ENCODE measurements at regions of chr1 and their contacts with region 1.

Region 1: DNA sequence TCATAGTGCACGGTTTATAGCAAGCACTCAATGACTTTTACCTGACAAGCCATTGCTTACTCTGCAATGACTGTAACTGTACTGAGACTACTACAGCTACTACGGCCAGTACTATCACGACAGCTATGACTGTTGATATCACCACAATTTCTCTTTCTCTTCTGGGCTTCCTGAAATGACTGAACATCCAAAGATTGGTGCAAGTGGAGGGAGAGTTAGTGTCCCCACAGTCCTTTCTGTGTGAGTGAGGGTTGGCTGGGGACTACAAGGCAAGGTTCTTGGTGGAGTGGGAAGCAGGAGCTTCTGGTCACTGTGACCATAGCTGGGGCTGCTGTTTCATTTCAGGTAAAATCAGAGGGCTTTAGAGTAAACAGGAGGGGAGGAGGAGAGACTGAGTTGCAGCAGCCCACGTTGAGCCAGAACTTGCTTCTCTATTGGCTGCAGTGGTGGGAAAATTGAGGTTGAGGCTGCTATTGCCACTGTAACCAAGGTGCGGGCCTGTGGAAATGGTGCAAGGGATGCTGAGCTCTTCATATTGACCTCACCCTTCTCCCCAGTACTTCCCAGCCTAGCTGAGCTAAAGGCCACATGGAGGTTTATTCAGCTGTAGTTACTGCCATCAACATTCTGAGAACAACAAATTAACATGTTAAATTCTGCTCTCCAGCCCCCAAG is 14.1 kb upstream of the IL10 start:
- DNase-seq: no peak
- H3K4me3 Mint-ChIP-seq: no peak overlapping the region
- H3K27ac Mint-ChIP-seq: no peak overlapping the region
- H3K4me1 Mint-ChIP-seq: peaks cover 78% of the 10 kb centered on the region
- H3K27me3 Mint-ChIP-seq: peaks cover 33% of the 10 kb centered on the region

Region 2: DNA sequence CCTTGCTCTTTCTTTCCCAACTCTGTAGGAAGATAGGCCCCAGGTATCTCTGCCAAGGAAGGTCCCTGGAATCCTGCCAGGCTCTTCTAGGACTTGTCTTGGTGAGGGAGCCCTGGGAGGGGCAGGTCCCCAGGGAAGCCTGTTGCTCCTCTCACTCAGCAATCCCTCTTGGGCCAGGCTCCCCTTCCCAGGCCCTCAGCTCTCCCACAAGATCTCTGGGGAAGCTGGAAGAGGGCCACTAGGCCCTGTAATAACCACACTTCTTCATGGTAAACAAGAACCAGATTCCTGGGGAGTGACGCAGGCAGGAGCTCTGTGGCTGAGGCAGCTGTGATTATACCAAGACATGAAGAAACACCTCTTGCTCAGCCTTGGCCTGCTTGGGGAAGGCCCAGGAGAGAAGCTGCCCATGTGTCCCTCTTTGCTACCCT is 111.6 kb before region 1 on chr1:
- CTCF ChIA-PET with region 1: no interaction called
- POLR2A ChIA-PET with region 1: no interaction called
- DNase-seq: no peak
- H3K4me3 Mint-ChIP-seq: no peak overlapping the region
- H3K27ac Mint-ChIP-seq: peak overlapping the region; percentile 14
- H3K4me1 Mint-ChIP-seq: peaks cover 10% of the 10 kb centered on the region
- H3K27me3 Mint-ChIP-seq: peaks cover 6% of the 10 kb centered on the region

Region 3: GRCh38 chr1:206766251-206766856 is 20.0 kb before region 1 on chr1:
- CTCF ChIA-PET with region 1: interaction called, 18 read pairs
- POLR2A ChIA-PET with region 1: interaction called, 3 read pairs
- DNase-seq: peak; percentile 75
- H3K4me3 Mint-ChIP-seq: peak overlapping the region; percentile 52
- H3K27ac Mint-ChIP-seq: peak overlapping the region; percentile 71
- H3K4me1 Mint-ChIP-seq: peaks cover 62% of the 10 kb centered on the region
- H3K27me3 Mint-ChIP-seq: peaks cover 19% of the 10 kb centered on the region

Region 4: DNA sequence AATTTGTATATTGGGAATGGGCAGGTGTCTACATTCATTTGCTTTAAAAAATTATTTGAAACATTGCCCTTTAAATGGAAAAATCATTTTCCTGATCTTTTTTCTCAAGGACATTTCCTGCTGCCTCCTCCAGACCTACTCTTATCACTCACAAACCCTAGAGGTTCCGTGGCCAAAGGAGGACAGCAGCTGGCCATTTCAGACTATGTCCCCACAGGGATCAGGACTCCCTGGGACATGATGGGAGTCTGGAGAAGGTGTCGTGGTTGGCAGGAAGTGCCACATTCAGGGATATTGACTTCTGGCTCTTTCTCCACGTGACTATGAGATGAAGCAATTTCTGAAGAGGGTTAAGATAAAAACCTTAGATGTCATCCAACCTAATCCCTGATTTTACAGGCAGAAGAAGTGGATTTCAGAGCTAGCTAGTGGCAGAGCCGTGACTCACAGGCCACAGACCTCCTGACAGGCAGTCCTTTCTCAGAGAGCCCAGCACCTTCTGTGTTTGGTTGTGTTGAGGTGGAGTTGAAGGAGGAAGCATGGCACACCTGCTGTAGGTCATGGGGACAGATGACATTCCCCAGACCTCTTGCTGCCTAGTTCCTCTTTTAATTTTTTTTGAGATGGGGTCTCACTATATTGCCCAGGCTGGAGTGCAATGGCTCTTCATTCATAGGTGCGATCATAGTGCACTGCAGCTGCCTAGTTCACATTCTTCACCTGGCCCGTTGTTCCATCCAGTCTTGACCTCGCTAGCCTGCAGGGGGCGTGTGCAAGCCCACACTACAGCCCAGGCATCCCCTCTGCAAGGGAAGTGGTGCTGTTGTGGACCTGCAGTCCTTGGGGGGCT is 11.4 kb after region 1 on chr1:
- CTCF ChIA-PET with region 1: interaction called, 12 read pairs
- POLR2A ChIA-PET with region 1: no interaction called
- DNase-seq: no peak
- H3K4me3 Mint-ChIP-seq: no peak overlapping the region
- H3K27ac Mint-ChIP-seq: no peak overlapping the region
- H3K4me1 Mint-ChIP-seq: peaks cover 38% of the 10 kb centered on the region
- H3K27me3 Mint-ChIP-seq: peaks cover 35% of the 10 kb centered on the region

Region 5: GRCh38 chr1:206803221-206803730 is 16.9 kb after region 1 on chr1:
- CTCF ChIA-PET with region 1: interaction called, 12 read pairs
- POLR2A ChIA-PET with region 1: no interaction called
- DNase-seq: peak; percentile 91
- H3K4me3 Mint-ChIP-seq: peak overlapping the region; percentile 28
- H3K27ac Mint-ChIP-seq: peak overlapping the region; percentile 89
- H3K4me1 Mint-ChIP-seq: peaks cover 74% of the 10 kb centered on the region
- H3K27me3 Mint-ChIP-seq: peaks cover 32% of the 10 kb centered on the region